ENCODE measurements at regions of chr6 and their contacts with region 1.

Region 1: GRCh38 chr6:87322304-87323212 is at the start of gene SMIM8:
- DNase-seq: peak; percentile 93
- CTCF ChIP-seq: peak; percentile 99

Region 2: DNA sequence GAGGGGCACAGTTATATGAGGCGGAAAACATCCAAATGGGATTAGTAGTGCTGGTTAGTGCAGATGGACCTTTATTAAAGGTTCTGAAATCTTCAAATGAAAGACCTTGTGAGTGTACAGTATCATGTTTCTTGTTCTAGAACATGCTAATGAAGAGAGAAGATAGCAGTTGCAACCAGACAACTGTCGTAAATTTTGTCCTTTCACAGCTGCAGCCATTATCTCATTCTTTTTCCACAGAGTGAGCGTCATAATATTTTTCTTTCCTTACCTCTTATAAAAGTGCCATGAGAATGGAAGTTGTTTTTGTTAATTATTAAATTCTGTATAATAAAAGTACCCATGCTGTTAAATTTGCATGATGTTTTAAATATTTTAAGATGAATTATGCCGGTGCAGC is 17.7 kb after region 1 on chr6:
- CTCF ChIA-PET with region 1: interaction called, 11 read pairs
- POLR2A ChIA-PET with region 1: no interaction called
- DNase-seq: no peak
- CTCF ChIP-seq: no peak

Region 3: GRCh38 chr6:87421575-87421974 is 99.0 kb after region 1 on chr6:
- CTCF ChIA-PET with region 1: no interaction called
- POLR2A ChIA-PET with region 1: no interaction called
- DNase-seq: no peak
- CTCF ChIP-seq: no peak

Region 4: DNA sequence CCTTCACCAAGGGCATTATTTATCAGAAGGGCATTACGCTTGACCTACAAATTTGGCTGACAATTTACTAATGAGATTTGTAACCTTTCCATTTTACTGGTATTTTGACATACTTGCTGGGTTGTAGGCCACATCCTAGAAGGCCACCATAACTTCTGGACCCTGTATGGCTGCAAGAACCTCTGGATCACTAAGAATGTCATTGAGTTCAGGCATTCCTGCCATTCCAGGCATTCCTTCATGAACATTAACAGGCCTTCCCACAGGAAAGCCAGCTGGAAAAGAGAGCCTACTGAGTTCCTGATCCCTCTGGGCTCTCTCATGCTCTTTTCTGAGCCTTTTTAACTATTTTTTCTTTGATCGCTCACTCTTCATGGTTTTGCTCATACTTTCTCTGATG is 121.8 kb after region 1 on chr6:
- CTCF ChIA-PET with region 1: no interaction called
- POLR2A ChIA-PET with region 1: no interaction called
- DNase-seq: no peak
- CTCF ChIP-seq: no peak

Region 5: DNA sequence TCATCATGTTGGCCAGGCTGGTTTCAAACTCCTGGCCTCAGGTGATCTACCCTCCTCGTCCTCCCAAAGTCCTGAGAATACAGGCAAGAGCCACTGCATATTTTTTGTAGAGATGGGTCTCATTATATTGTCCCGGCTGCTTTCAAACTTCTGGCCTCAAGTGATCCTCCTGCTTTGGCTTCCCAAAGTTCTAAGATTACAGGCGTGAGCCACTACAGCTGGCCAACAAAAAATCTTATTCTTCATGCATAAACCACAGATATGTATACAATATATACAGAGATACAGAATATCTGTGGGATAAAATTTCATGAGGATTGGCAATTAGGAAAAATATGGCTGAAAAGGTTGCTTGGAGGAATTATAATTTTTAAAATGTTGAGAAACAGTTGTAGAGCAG is 200.1 kb after region 1 on chr6:
- CTCF ChIA-PET with region 1: no interaction called
- POLR2A ChIA-PET with region 1: no interaction called
- DNase-seq: no peak
- CTCF ChIP-seq: no peak